K562 (cell line): ENCODE measurements at regions of chr6 and their contacts with region 1.

Region 1: GRCh38 chr6:139644821-139645220 is 270.4 kb upstream of the CITED2 start:
- DNase-seq: no peak
- ATAC-seq: no peak
- H3K4me3 ChIP-seq: no peak overlapping the region
- H3K27ac ChIP-seq: no peak overlapping the region
- H3K4me1 ChIP-seq: peaks cover 19 to 48% of the 10 kb centered on the region in 2 experiments
- H3K27me3 ChIP-seq: no peaks in the 10 kb centered on the region
- CTCF ChIP-seq: no peak
- EP300 ChIP-seq: no peak
- POLR2A ChIP-seq: no peak
- RAD21 ChIP-seq: no peak

Region 2: GRCh38 chr6:139448051-139448649 is 196.7 kb before region 1 on chr6:
- CTCF ChIA-PET with region 1: no interaction called
- POLR2A ChIA-PET with region 1: no interaction called
- in situ Hi-C with region 1: no loop called
- intact Hi-C with region 1: loop called (anchors 5 kb)
- DNase-seq: peak in 3 of 4 experiments; percentile 27 to 70 (median 35)
- ATAC-seq: peak; percentile 30
- H3K4me3 ChIP-seq: no peak overlapping the region
- H3K27ac ChIP-seq: peak overlapping the region; percentile 87
- H3K4me1 ChIP-seq: peaks cover 11 to 65% of the 10 kb centered on the region in 2 experiments
- H3K27me3 ChIP-seq: no peaks in the 10 kb centered on the region
- CTCF ChIP-seq: no peak
- EP300 ChIP-seq: peak; percentile 66
- POLR2A ChIP-seq: no peak
- RAD21 ChIP-seq: 0 out of 4 replicates have a peak, but pooled peaks of 1 of the 2 experiments have one; percentile 28

Region 3: GRCh38 chr6:139500977-139501376 is 143.8 kb before region 1 on chr6:
- CTCF ChIA-PET with region 1: no interaction called
- POLR2A ChIA-PET with region 1: no interaction called
- in situ Hi-C with region 1: no loop called
- intact Hi-C with region 1: no loop called
- DNase-seq: no peak
- ATAC-seq: no peak
- H3K4me3 ChIP-seq: no peak overlapping the region
- H3K27ac ChIP-seq: no peak overlapping the region
- H3K4me1 ChIP-seq: peaks cover 16 to 19% of the 10 kb centered on the region in 2 experiments
- H3K27me3 ChIP-seq: no peaks in the 10 kb centered on the region
- CTCF ChIP-seq: no peak
- EP300 ChIP-seq: no peak
- POLR2A ChIP-seq: no peak
- RAD21 ChIP-seq: no peak

Region 4: GRCh38 chr6:139533573-139534471 is 111.0 kb before region 1 on chr6:
- CTCF ChIA-PET with region 1: no interaction called
- POLR2A ChIA-PET with region 1: interaction called, 3 read pairs
- in situ Hi-C with region 1: no loop called
- intact Hi-C with region 1: loop called (anchors 5 kb)
- DNase-seq: peak; percentile 70 to 95 (median 78)
- ATAC-seq: peak; percentile 94
- H3K4me3 ChIP-seq: 0 out of 2 replicates have a peak overlapping the region, but pooled peaks have one; percentile 5
- H3K27ac ChIP-seq: peak overlapping the region; percentile 70
- H3K4me1 ChIP-seq: peaks cover 10 to 44% of the 10 kb centered on the region in 2 experiments; a peak in 4 of 5 replicates
- H3K27me3 ChIP-seq: no peaks in the 10 kb centered on the region
- CTCF ChIP-seq: no peak
- EP300 ChIP-seq: peak; percentile 75
- POLR2A ChIP-seq: no peak; the same call in 1 of the 2 replicates
- RAD21 ChIP-seq: peak in 1 of 2 experiments; percentile 20; a peak in 1 of 4 replicates

Region 5: GRCh38 chr6:139588076-139588639 is 56.7 kb before region 1 on chr6:
- CTCF ChIA-PET with region 1: no interaction called
- POLR2A ChIA-PET with region 1: no interaction called
- in situ Hi-C with region 1: no loop called
- intact Hi-C with region 1: loop called (anchors 5 kb)
- DNase-seq: peak; percentile 39 to 83 (median 58)
- ATAC-seq: peak; percentile 63
- H3K4me3 ChIP-seq: no peak overlapping the region
- H3K27ac ChIP-seq: no peak overlapping the region
- H3K4me1 ChIP-seq: peaks cover 0 to 31% of the 10 kb centered on the region in 2 experiments; a peak in 3 of 5 replicates
- H3K27me3 ChIP-seq: no peaks in the 10 kb centered on the region
- CTCF ChIP-seq: no peak
- EP300 ChIP-seq: peak; percentile 55
- POLR2A ChIP-seq: no peak
- RAD21 ChIP-seq: peak in 1 of 2 experiments; percentile 18; a peak in 1 of 4 replicates